ENCODE measurements at regions of chr4 and their contacts with region 1.

Region 1: DNA sequence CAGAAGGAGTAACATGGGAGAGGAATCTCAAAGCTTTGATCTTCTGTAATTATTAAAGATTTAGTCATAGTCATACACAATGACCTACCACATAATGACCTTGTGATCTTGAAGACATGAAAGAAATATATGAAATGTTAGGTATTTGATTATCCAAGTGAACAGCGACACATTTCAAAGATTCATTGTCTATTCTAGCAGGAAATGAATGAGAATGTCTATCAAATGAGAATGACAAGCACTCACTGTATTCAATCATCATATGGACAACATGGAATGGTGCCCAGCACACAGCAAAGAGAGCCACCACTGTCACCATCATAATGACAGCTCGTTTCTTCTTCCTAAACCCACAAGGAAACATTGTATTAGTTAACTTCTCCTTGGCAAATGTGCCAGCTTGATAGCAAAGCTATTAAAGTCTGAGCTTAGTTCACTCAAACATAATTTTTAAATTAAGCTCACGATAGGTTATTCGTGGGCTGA is 50.6 kb downstream of the QRFPR start:
- DNase-seq: no peak
- H3K4me3 ChIP-seq: no peak overlapping the region
- H3K27me3 ChIP-seq: no peaks in the 10 kb centered on the region
- CTCF ChIP-seq: no peak

Region 2: GRCh38 chr4:121307445-121308327 is 22.5 kb before region 1 on chr4:
- CTCF ChIA-PET with region 1: interaction called, 12 read pairs
- POLR2A ChIA-PET with region 1: no interaction called
- DNase-seq: peak; percentile 8
- H3K4me3 ChIP-seq: no peak overlapping the region
- H3K27me3 ChIP-seq: peaks cover 2% of the 10 kb centered on the region; the same call in 1 of the 2 replicates
- CTCF ChIP-seq: peak; percentile 80

Region 3: GRCh38 chr4:121358473-121358872 is 28.2 kb after region 1 on chr4:
- CTCF ChIA-PET with region 1: no interaction called
- POLR2A ChIA-PET with region 1: no interaction called
- DNase-seq: peak; percentile 66
- H3K4me3 ChIP-seq: no peak overlapping the region
- H3K27me3 ChIP-seq: no peaks in the 10 kb centered on the region
- CTCF ChIP-seq: no peak

Region 4: GRCh38 chr4:121484633-121485032 is 154.4 kb after region 1 on chr4:
- CTCF ChIA-PET with region 1: no interaction called
- POLR2A ChIA-PET with region 1: no interaction called
- DNase-seq: no peak
- H3K4me3 ChIP-seq: no peak overlapping the region
- H3K27me3 ChIP-seq: no peaks in the 10 kb centered on the region
- CTCF ChIP-seq: peak; percentile 90

Region 5: DNA sequence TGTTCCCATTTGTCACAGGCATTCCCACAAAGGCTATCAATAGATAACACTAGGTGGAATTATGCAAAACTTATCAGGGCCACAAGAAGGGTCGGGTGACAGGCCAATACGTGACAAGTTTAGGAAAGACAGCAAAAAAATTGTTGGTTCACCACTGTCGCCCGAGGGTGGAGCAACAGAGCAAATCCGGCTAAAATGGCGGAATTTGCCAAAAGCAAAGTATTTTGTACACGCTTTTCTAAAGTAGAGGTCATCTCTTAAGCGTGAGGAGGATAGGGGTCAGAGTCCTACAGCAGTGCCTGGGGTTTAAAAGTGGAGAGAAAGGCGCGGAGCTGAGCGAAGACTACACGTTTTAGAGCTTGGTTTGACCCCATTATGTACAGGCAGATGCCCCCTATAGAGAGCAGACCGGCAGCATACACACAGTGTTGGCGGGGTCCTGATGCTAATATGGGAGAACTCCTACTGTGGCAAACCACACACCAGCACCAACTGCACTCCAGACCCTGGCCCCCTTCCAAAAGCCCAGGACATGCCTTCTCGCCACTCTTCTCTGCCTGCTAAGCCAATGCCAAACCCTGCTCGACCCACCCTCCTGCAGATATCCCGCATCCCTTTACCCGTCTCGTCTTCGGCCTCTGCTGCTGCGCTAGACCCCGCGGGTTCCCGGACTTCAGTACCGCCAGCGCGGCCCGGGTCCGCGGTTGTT is 492.7 kb after region 1 on chr4:
- CTCF ChIA-PET with region 1: no interaction called
- POLR2A ChIA-PET with region 1: no interaction called
- DNase-seq: no peak
- H3K4me3 ChIP-seq: peak overlapping the region; percentile 85
- H3K27me3 ChIP-seq: no peaks in the 10 kb centered on the region
- CTCF ChIP-seq: peak; percentile 17; the same call in 1 of the 2 replicates